Dendritic cell treated with granulocyte-macrophage colony-stimulating factor and Interleukin-4, amounts not matched to agents 40 ng/mL and 50 ng/mL, for 4 days (primary cell): ENCODE measurements at regions of chr5 and their contacts with region 1.

Region 1: DNA sequence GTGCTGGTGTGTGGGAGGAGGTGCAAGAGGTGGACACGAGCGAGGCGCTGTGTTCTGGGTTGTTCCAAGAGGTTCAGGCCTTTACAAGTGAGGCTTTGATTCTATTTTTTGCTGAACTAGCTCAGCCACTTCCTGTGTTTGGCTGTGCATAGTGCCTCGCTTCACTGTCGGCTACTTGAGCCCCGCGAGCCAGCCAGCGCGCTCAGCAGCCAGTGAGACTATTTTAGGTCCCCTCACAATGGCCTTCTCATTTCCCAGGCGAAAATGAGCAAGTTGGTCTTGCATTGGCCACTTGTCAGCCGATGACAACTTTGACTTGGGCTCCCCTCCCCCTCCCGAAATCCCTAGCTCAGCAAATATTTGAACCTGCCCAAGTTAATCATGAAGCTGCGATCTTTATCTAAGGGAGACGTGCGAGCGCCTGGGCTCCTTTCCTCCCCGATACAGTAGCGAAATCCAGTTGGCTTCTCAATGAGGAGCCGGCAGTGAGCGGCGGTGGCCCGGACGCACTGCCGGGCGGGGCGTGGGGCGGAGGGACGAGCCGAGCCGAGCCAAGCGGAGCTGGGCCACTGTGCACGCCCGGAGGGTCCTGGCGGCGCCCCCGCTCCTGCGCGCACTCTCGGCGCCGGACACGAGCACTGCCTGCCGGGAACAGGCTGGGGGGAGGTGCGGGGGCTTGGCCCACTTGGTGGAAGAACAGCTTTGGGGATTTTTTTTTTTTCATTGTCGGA is 72.6 kb downstream of the PIK3R1 start:
- H3K4me3 Mint-ChIP-seq: peak overlapping the region; percentile 74
- H3K27ac Mint-ChIP-seq: peak overlapping the region; percentile 77
- H3K4me1 Mint-ChIP-seq: peaks cover 29% of the 10 kb centered on the region
- H3K27me3 Mint-ChIP-seq: no peaks in the 10 kb centered on the region

Region 2: DNA sequence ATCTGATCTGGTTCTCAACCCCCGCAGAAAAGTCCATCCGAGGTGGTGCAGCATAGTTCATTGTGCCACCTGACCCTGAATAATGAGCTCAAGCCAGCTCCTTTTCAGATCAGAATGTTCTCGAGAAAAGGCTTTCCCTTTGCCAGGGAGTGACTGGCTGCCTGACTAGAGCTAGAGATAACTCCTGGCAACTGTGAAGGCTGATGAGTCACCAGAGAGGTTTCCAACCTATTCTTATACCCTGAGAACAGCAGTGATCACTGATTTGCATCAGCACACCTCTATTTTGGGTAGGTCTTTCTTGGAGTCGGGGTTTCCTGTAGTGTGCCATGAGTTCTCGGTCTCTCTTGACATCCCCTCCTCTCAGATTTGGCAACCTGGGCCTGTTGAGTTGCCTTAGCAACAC is 55.3 kb after region 1 on chr5:
- intact Hi-C with region 1: no loop called
- H3K4me3 Mint-ChIP-seq: no peak overlapping the region
- H3K27ac Mint-ChIP-seq: no peak overlapping the region
- H3K4me1 Mint-ChIP-seq: peaks cover 21% of the 10 kb centered on the region
- H3K27me3 Mint-ChIP-seq: peaks cover 19% of the 10 kb centered on the region

Region 3: DNA sequence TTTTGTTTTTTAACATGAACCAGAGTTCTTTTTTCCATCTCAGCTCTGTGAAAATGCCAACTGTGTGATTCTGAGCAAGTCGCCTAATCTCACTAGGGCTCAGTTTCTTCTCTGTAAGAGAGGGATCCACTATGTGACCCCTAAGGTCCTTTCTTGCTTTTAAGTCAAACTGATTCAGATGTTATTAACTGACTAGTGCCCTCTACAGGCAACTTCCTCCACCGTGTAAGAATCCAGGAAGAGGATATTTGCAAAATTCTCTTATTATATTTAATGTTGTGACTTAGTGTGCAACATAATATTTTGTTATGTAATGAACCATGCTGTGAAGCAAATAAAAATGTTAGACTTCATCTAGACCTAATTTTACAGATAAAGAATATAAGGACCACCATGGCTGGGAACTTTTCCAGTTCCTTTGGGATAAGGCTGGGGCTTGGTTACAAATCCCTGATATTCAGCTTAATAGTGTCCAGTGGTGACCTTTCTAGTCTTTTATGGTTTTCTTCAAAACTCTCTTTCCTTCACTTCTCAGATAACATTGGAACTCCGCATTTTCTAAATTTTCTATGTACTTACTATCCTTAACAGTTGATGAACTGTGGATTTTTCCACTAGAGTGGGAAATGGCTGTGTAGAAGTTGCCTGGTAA is 172.1 kb after region 1 on chr5:
- intact Hi-C with region 1: loop called (anchors 1 kb)
- H3K4me3 Mint-ChIP-seq: no peak overlapping the region
- H3K27ac Mint-ChIP-seq: no peak overlapping the region
- H3K4me1 Mint-ChIP-seq: no peaks in the 10 kb centered on the region
- H3K27me3 Mint-ChIP-seq: no peaks in the 10 kb centered on the region

Region 4: GRCh38 chr5:68673106-68673822 is 385.1 kb after region 1 on chr5:
- intact Hi-C with region 1: loop called (anchors 10 kb)
- H3K4me3 Mint-ChIP-seq: peak overlapping the region; percentile 43
- H3K27ac Mint-ChIP-seq: no peak overlapping the region
- H3K4me1 Mint-ChIP-seq: peaks cover 23% of the 10 kb centered on the region
- H3K27me3 Mint-ChIP-seq: no peaks in the 10 kb centered on the region

Region 5: GRCh38 chr5:68962757-68963484 is 674.8 kb after region 1 on chr5:
- intact Hi-C with region 1: loop called (anchors 2 kb)
- H3K4me3 Mint-ChIP-seq: no peak overlapping the region
- H3K27ac Mint-ChIP-seq: no peak overlapping the region
- H3K4me1 Mint-ChIP-seq: peaks cover 5% of the 10 kb centered on the region
- H3K27me3 Mint-ChIP-seq: no peaks in the 10 kb centered on the region